ENCODE measurements at regions of chr12 and their contacts with region 1.

Region 1: GRCh38 chr12:130031571-130032189 is 127.9 kb upstream of the TMEM132D start:
- DNase-seq: peak; percentile 78

Region 2: GRCh38 chr12:129635021-129635685 is 396.5 kb before region 1 on chr12:
- in situ Hi-C with region 1: no loop called
- DNase-seq: no peak

Region 3: GRCh38 chr12:130281153-130281799 is 249.6 kb after region 1 on chr12:
- in situ Hi-C with region 1: no loop called
- DNase-seq: peak; percentile 20

Region 4: DNA sequence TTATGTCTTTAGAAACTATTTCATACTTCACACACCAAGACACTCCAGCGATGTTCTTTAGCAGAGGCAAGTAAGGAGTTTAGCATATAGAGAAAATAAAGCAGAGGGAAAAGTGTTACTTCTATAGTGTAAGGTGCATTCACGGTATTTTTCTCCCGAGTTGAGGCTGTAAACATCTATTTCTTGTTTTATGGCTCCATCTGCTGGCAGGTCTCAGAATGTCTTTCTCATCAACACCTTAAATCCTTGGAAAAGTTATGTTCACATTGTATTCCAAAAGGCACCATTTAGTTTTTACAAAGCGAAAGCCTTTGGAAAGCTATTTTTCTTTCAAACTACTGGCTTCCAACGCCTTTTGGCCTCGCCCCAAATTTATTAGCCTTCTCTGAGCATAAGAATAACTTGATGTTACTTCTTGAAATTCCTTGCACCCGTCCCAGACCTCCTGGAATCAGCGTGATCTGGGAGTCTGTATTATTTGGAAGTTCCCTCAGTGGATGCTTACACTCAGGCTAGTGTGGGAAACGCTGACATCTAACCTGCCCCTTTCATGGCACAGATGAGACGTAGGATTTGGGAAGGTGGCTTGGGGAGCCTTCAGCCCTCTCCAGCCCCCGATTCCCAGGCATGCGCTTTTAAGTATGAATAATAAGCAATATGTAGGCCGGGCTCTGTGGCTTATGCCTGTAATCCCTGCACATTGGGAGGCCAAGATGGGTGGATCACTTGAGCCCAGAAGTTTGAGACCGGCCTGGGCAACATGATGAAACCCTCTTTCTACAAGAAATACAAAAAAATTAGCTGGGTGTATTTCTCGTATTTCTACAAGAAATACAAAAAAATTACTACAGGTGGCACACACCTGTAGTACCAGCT is 304.1 kb after region 1 on chr12:
- in situ Hi-C with region 1: loop called (anchors 25 kb)
- DNase-seq: peak; percentile 76